GM12878 (cell line): ENCODE measurements at regions of chr3 and their contacts with region 1.

Region 1: GRCh38 chr3:151798466-151798865 is 15.4 kb upstream of the AADAC start:
- DNase-seq: no peak
- ATAC-seq: no peak
- H3K4me3 ChIP-seq: no peak overlapping the region
- H3K27ac ChIP-seq: no peak overlapping the region
- H3K4me1 ChIP-seq: no peaks in the 10 kb centered on the region
- H3K27me3 ChIP-seq: no peaks in the 10 kb centered on the region
- CTCF ChIP-seq: no peak
- EP300 ChIP-seq: no peak
- POLR2A ChIP-seq: no peak
- RAD21 ChIP-seq: no peak

Region 2: DNA sequence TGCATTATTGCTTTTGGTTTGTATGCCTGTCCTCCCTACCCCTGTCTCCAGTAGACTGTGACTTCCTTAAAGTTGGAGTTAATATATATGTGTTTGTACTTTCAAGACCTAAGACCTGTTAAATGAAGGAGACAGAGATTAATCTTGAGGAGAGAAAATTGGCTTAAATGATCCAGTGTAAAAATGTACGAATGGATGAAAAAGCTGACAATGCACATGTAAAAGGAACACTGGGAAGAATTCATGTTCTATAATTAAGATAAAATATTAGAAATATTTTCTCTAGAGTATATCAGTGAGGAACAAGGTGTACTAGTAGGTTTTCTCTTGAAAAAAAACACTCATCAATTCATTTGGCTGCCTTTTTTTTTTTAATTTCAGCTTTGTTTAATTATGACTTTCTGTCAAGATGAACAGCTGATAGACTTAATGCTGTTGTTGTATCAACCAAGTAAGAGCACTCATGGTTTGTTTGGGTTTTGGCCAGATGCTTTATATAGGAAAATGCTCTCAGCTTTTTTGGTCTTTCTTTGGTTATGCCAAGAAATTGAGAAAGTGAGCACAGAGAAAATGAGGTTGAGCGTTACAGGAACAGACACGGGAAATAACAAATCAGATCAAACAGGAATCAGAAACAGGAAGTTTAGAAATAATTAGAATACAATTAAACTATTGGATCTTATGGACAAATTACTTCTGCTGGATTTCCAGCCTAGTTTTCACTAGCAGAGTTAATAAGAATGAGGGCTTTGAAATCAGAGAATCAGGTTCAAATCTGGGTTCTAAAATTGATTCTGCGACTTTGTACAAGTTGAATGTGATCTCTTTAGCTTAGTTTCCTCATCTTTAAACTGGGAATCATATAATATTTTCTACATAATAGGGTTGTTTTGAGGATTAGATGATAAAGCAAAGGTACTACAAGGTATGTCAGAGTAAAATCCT is 22.9 kb before region 1 on chr3:
- CTCF ChIA-PET with region 1: interaction called, 3 read pairs
- POLR2A ChIA-PET with region 1: interaction called, 11 read pairs
- RAD21 ChIA-PET with region 1: no interaction called
- SMC1A ChIA-PET with region 1: interaction called, 3 read pairs
- in situ Hi-C with region 1: no loop called
- intact Hi-C with region 1: no loop called
- DNase-seq: no peak
- ATAC-seq: no peak
- H3K4me3 ChIP-seq: no peak overlapping the region
- H3K27ac ChIP-seq: no peak overlapping the region
- H3K4me1 ChIP-seq: no peaks in the 10 kb centered on the region
- H3K27me3 ChIP-seq: no peaks in the 10 kb centered on the region
- CTCF ChIP-seq: no peak
- EP300 ChIP-seq: no peak
- POLR2A ChIP-seq: no peak
- RAD21 ChIP-seq: no peak